A673 (cell line): ENCODE measurements at regions of chr9 and their contacts with region 1.

Region 1: GRCh38 chr9:129131300-129132145 is 20.3 kb downstream of the PTPA start:
- DNase-seq: peak; percentile 83
- H3K4me3 ChIP-seq: no peak overlapping the region
- H3K27ac ChIP-seq: no peak overlapping the region
- H3K4me1 ChIP-seq: peaks cover 10% of the 10 kb centered on the region
- H3K27me3 ChIP-seq: no peaks in the 10 kb centered on the region
- CTCF ChIP-seq: peak; percentile 99

Region 2: DNA sequence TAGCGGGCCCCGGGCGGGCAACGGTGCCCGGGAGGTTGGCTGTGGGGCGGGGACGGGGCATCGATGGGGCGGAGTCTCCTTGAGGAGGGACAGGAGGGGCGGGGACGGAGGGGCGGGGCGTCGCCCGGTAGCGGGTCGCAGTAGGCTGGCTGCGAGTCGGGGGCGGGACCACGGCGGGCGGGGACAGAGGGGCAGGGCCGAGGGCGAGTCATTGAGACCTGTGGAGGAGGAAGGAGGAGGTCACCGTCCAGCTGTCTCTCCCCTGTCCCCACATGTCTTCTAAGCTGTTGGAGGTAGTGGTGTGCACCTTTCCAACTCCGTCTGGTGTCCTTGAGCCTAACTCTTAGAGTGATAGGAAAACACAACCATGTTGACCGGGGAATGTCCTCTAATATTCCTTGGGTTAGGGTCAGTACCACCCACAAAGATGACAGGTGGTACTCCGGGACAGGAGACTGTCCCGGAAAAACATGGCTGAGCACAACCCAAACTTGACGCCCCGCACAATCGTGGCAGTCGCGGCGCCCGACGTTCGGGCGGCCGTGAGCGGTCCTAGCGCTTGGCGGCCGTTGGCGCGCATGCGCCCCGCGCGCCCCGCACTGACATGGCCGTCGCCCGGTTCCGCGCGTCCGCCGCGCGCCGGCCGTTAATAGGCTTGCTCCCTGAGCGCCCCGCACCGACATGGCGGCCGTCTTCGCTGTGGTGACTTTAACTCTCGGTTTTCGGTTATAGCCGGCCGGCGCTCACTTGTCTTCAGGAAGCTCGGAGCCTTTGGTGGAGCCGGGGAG is 20.6 kb before region 1 on chr9 and contains the starts of genes CRAT and PTPA:
- CTCF ChIA-PET with region 1: interaction called, 10 read pairs
- POLR2A ChIA-PET with region 1: no interaction called
- intact Hi-C with region 1: loop called (anchors 2 kb)
- DNase-seq: peak; percentile 95
- H3K4me3 ChIP-seq: peak within 1 kb of the TSS; percentile 88
- H3K27ac ChIP-seq: peak within 1 kb of the TSS; percentile 94
- H3K4me1 ChIP-seq: peaks cover 11% of the 10 kb centered on the region
- H3K27me3 ChIP-seq: no peaks in the 10 kb centered on the region
- CTCF ChIP-seq: no peak
- total RNA-seq, gene CRAT: 10.1 and 16.2 TPM in 2 replicates
- total RNA-seq, gene PTPA: 153 and 157 TPM in 2 replicates

Region 3: DNA sequence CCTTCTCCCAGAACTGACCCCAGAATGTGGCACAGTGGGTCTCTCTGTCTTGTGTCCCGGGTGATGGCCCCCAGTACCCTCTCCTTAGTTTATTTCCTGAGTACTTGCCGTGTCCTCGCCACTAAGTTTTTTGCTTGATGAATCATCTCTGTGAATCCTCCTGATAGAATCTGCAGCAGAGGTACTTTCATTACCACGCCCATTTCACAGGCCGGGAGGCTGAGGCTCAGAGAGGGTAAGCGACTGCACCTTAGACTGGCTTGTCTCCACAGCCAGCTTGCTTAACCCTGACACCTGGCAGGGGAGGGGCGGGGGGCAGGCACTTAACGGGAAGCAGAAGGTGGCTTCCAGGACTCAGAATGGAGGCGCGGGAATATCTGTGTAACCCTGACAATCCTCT is 54.5 kb after region 1 on chr9:
- CTCF ChIA-PET with region 1: no interaction called
- POLR2A ChIA-PET with region 1: no interaction called
- intact Hi-C with region 1: no loop called
- DNase-seq: no peak
- H3K4me3 ChIP-seq: no peak overlapping the region
- H3K27ac ChIP-seq: no peak overlapping the region
- H3K4me1 ChIP-seq: no peaks in the 10 kb centered on the region
- H3K27me3 ChIP-seq: no peaks in the 10 kb centered on the region
- CTCF ChIP-seq: no peak

Region 4: DNA sequence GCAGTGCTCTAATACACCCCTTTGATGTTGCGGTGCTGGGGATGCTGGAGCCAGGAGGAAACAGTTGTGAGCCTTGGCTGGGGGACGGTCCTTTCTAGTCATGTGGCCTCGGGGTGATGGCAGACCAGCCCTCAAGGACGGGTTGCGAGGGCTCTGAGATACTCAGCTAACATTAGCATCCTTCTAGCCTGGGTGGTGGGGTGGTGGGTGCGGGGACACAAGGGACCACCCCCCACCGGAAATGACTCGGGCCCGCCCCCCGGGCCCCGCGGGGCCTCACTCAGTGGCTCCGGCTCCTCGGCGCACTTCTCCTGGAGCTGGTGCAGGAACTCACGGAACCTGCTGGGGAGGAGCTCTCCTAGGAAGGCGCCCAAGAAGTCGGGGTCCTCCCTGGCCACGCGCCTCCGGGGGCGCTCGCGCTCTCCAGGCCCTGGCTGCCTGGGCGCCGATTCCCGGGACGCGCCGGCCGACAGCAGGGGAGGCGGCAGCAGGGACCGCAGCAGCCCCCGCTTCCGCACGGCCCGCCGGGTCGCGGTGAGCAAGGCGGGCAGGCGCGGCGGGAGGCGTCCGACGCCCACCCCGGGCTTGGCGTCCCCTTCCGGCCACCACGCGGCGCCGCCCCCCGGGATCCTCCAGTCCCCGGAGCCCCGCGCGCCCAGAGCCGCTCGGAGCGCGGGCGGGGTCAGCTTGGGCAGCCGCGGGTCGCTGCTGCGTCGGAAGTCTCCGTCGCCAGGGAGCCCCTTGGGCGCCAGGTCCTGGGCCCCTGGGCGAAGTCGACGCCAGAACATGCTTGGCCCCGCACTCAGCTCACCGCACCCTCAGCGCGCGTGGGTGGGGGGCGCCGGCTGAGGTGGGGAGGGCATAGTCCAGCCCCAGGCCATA is 488.5 kb after region 1 on chr9:
- CTCF ChIA-PET with region 1: interaction called, 24 read pairs
- POLR2A ChIA-PET with region 1: no interaction called
- intact Hi-C with region 1: no loop called
- DNase-seq: peak; percentile 71
- H3K4me3 ChIP-seq: peak overlapping the region; percentile 55
- H3K27ac ChIP-seq: peak overlapping the region; percentile 63
- H3K4me1 ChIP-seq: peaks cover 10% of the 10 kb centered on the region
- H3K27me3 ChIP-seq: no peaks in the 10 kb centered on the region
- CTCF ChIP-seq: peak; percentile 42

Region 5: DNA sequence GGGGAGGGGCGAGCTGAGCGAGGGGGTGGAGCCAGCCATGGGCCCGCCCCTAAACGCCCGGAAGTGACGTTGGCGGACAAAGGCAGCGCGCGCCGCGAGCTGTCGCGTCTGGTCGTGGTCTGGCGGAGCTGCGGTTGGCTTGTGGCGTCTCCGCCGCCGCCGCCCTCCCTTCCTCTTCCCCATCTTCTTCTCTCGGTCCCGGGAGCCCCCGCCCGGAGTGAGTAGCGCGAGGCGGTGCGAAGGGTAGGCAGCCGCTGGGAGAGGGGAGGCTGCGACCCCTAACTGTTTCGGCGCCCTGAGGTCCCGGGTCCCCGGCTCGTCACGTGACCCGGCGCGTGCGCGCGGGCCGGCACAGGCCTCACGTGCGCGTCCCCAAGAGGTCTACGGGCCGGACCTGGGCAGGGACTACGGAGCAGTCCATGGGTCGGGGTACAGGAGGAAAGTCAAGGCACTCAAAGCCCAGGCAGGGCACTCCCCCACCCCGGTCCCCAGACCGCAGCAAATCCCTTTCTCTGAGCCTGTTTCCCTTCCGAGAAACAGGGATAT is 494.6 kb after region 1 on chr9 and contains the start of gene NTMT1:
- CTCF ChIA-PET with region 1: interaction called, 24 read pairs
- POLR2A ChIA-PET with region 1: no interaction called
- intact Hi-C with region 1: no loop called
- DNase-seq: peak; percentile 88
- H3K4me3 ChIP-seq: peak within 1 kb of the TSS; percentile 97
- H3K27ac ChIP-seq: peak within 1 kb of the TSS; percentile 98
- H3K4me1 ChIP-seq: peaks cover 39% of the 10 kb centered on the region
- H3K27me3 ChIP-seq: no peaks in the 10 kb centered on the region
- CTCF ChIP-seq: no peak
- total RNA-seq, gene NTMT1: 82.8 and 87.1 TPM in 2 replicates

Region 6: DNA sequence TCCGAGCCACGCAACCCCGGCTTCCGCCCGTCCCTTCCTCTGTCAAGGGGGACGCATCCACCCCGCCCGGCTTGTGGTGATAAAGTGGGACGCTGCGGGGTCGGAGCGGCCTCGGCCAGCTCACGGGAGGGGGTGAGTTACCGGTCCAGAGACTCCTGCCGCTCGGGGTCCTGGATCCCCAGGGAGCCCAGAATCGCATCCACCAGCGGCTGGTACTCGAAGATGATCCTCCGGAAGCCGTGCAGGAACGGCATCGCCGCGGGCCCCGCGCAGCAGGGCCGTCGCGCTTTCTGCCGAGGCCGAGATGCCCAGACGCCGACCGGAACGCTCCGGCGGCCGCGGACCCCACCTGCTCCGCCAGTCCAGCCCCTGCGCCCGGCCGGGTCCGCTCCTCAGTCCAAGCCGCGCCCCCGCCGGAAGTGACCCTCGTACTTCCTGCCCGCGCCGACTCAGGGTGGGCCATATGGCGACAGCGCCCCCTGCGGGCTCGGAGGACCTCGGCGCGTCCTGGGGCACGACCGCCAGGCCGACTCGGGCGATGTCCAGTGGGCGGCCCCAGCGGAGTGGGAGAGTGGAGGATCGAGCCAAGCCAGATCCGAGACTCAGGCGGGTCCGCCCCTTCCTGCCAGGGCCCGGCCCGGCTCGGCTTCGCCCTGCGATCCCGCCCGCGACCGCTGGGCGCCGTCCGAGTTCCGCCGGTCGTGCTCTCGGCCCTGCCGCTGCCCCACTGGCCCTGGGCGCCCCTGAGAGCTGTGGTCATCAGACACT is 510.4 kb after region 1 on chr9 and contains the start of gene ASB6:
- CTCF ChIA-PET with region 1: interaction called, 10 read pairs
- POLR2A ChIA-PET with region 1: no interaction called
- intact Hi-C with region 1: no loop called
- DNase-seq: peak; percentile 92
- H3K4me3 ChIP-seq: peak within 1 kb of the TSS; percentile 91
- H3K27ac ChIP-seq: peak within 1 kb of the TSS; percentile 85
- H3K4me1 ChIP-seq: peaks cover 14% of the 10 kb centered on the region
- H3K27me3 ChIP-seq: no peaks in the 10 kb centered on the region
- CTCF ChIP-seq: peak; percentile 99
- total RNA-seq, gene ASB6: 30.4 and 36.5 TPM in 2 replicates